HEK293T (cell line): ENCODE measurements at regions of chr14 and their contacts with region 1.

Region 1: DNA sequence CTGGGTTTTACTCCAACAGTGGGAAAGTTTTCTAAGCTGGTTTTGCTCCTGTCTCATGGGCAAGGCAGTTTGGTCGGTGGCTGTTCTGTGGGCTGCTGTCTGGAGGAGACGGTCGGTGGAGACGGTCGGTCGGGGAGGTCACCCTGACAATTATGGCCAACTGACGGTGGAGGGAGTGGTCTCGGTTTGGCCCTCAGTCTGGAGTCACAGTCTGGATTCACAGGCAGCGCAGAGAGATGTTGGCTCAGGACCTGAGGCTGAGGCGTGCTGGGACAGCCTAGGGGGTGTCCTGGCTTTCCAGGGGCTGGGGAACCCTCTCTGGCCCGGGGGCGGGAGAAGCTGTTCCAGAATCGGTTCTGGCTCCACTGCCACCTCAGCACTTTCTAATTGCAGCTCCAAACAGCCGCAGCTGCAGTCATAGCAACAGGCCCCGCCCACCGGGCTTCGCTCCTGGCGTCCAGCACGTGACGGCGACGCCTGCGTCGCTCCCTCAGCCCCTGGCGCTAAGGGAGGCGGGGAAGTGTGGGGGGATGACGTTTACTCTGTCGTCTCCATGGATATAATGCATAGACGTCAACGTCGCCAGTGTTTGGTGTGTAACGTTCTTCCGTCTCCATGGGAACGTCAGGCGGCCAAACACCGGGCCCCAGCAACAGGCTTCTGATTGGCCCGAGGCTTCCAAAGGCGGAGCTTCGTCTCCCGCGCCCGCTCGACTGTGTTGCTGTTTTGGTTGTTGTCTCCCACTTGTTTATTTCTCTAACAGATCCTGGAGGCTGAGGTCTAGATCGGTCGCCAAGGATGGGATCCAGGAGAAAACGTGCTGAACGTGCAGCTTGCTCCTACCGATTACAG is 19.8 kb upstream of the FOS start:
- DNase-seq: peak; percentile 98

Region 2: GRCh38 chr14:75277000-75277801 is 18.4 kb after region 1 on chr14:
- CTCF ChIA-PET with region 1: no interaction called
- POLR2A ChIA-PET with region 1: interaction called, 13 read pairs
- DNase-seq: peak; percentile 71

Region 3: GRCh38 chr14:75293920-75294642 is 35.2 kb after region 1 on chr14:
- CTCF ChIA-PET with region 1: interaction called, 4 read pairs
- POLR2A ChIA-PET with region 1: interaction called, 22 read pairs
- DNase-seq: peak; percentile 97